PC-9 (cell line): ENCODE measurements at regions of chr20 and their contacts with region 1.

Region 1: GRCh38 chr20:4898282-4899244 is 102.7 kb downstream of the SLC23A2 start:
- DNase-seq: peak; percentile 96 to 98
- H3K4me3 ChIP-seq: no peak overlapping the region
- H3K27ac ChIP-seq: peak overlapping the region; percentile 62
- H3K4me1 ChIP-seq: peaks cover 49% of the 10 kb centered on the region
- H3K27me3 ChIP-seq: no peaks in the 10 kb centered on the region
- CTCF ChIP-seq: no peak

Region 2: GRCh38 chr20:4869290-4870193 is 29.0 kb before region 1 on chr20:
- CTCF ChIA-PET with region 1: no interaction called
- POLR2A ChIA-PET with region 1: interaction called, 13 read pairs
- intact Hi-C with region 1: loop called (anchors 1 kb)
- DNase-seq: peak; percentile 49 to 81
- H3K4me3 ChIP-seq: no peak overlapping the region
- H3K27ac ChIP-seq: peak overlapping the region; percentile 51
- H3K4me1 ChIP-seq: peaks cover 21% of the 10 kb centered on the region
- H3K27me3 ChIP-seq: no peaks in the 10 kb centered on the region
- CTCF ChIP-seq: no peak

Region 3: DNA sequence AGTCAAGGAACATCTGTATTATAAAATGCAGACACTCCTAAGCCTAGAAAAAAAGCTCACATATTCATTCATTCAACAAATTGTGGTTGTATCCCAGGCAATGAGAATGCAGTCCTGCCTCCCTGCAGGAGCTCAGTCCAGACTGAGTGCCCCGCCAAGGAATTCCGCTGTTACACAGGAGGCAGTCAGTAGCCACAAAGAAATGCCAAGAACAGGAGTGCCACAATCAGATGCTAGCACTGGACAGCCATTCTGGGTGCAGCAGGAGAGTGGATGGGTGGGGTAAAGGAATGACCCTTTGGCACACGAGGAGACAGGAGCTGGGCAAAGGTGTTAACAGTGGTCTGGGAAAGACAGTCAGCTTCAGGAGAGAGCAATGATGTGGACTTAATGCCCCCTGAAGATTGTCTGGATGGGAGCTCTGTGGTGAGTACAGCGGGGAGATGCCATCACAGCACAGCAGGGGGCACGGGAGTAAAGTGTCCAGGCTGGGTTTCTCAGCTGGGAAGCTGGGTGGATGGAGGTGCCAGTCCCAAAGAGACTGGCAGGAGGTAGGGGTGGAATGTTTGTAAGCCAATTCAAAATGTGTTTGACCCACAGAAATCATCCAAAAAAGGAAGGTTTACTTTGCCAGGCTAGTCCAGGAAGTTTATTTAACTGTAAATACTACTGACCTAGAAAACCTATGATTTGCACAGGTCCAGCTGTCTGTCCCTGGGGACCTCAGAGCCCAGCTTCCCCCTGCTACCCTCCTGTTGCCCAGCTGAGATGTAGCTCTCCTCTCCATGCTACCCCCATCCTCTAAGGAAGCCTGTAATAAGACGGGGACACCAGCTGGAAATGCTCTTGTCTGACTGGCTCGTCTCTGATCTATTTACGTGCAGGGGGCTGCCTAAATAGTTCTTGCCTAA is 18.7 kb after region 1 on chr20:
- CTCF ChIA-PET with region 1: interaction called, 3 read pairs
- POLR2A ChIA-PET with region 1: interaction called, 13 read pairs
- intact Hi-C with region 1: loop called (anchors 1 kb)
- DNase-seq: peak; percentile 50 to 82
- H3K4me3 ChIP-seq: no peak overlapping the region
- H3K27ac ChIP-seq: no peak overlapping the region
- H3K4me1 ChIP-seq: peaks cover 14% of the 10 kb centered on the region
- H3K27me3 ChIP-seq: no peaks in the 10 kb centered on the region
- CTCF ChIP-seq: no peak

Region 4: GRCh38 chr20:4949833-4950178 is 51.2 kb after region 1 on chr20:
- CTCF ChIA-PET with region 1: interaction called, 6 read pairs
- POLR2A ChIA-PET with region 1: no interaction called
- intact Hi-C with region 1: loop called (anchors 2 kb)
- DNase-seq: no peak
- H3K4me3 ChIP-seq: no peak overlapping the region
- H3K27ac ChIP-seq: no peak overlapping the region
- H3K4me1 ChIP-seq: peaks cover 16% of the 10 kb centered on the region
- H3K27me3 ChIP-seq: no peaks in the 10 kb centered on the region
- CTCF ChIP-seq: peak; percentile 32; the same call in 1 of the 2 replicates

Region 5: DNA sequence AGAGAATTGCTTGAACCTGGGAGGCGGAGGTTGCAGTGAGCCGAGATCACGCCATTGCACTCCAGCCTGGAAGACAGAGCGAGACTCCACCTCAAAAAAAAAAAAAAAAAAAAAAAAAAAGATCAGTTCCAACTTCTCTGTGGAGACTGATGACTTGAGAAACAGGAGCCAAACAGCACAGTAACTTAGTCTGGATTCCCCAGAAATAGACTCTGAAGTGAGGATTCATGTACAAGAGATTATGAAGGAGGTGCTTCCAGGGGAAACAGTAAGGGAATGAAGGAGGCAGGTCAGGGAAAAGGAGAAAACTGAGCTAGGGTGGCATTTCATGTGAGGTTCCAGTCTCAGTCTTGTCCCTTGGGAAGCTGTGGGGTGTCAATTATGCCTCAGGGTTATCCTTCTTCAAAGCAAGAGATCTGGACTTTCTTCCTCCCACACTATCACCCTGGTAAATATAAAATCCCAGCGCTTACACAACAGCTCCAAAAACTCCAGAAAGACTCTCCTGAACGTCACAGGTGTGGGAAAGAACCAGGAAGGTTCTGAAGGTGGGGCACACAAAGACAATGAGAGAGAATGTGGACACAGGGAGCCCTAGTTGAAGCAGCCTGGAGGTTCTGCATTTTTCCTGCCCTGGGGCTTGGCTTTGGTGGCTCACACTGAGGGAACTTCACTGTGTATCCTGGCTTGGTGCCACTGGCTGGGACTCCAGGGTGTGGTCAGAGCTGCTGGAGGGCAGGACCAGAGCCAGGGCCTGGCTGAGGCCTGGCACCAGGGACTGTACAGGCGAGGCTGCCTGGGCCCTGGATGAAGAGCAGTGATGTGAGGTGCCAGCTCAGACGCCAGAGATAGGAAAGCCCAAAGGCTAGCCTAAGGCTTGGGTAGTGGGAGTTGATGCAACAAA is 174.4 kb after region 1 on chr20:
- CTCF ChIA-PET with region 1: no interaction called
- POLR2A ChIA-PET with region 1: interaction called, 4 read pairs
- intact Hi-C with region 1: loop called (anchors 5 kb)
- DNase-seq: peak; percentile 97 to 99
- H3K4me3 ChIP-seq: no peak overlapping the region
- H3K27ac ChIP-seq: peak overlapping the region; percentile 89
- H3K4me1 ChIP-seq: peaks cover 31% of the 10 kb centered on the region
- H3K27me3 ChIP-seq: no peaks in the 10 kb centered on the region
- CTCF ChIP-seq: no peak